CD8-positive, alpha-beta T cell (primary cell): ENCODE measurements at regions of chr17 and their contacts with region 1.

Region 1: DNA sequence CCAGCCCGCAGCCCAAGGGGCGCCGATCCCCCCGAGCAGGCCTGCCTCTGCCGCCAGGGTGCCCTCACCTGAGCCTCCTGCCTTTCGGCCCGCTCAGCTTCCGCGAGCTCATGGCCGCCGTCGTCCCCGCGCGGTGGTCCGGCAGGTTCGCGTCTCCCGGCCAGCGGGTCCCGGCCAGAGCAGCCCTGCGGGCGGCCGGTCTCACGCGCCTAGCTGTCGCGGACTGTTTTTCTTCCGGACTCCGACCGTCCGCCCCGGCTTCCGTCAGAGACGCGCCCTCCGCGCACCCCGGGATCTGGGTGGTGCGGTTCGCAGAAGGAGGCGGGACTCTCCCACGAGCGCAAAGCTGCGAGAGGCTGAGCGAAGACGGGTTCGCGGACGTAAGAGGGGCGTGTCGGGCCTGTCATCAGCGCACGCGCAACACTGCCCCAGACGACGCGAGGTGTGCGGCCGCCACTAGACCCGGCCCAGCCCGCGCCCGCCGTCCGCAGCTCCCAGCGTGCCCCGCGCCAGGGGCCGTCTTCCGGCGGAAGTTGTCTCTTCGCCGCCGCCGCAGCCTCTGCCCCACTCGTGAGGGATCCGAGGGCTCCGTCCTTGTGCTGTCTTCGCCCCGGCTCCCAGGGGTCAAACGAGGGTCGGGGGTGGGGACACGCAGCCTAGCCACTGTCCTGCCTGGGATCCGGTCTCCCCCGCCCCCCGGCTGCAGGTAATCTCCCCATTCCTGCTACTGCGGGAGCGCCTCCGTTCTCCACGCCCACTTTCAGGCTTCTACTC is at the start of gene INPP5K:
- DNase-seq: peak; percentile 95 to 100 (median 98)
- ATAC-seq: peak; percentile 91
- H3K4me3 ChIP-seq: peak within 1 kb of the TSS; percentile 93 to 99
- H3K4me3 Mint-ChIP-seq: peak within 1 kb of the TSS; percentile 90
- H3K27ac ChIP-seq: peak within 1 kb of the TSS; percentile 86 to 93
- H3K27ac Mint-ChIP-seq: peak within 1 kb of the TSS; percentile 91
- H3K4me1 ChIP-seq: peaks cover 20% of the 10 kb centered on the region
- H3K4me1 Mint-ChIP-seq: peaks cover 24% of the 10 kb centered on the region
- H3K27me3 ChIP-seq: no peaks in the 10 kb centered on the region
- H3K27me3 Mint-ChIP-seq: no peaks in the 10 kb centered on the region
- CTCF ChIP-seq: no peak
- total RNA-seq, gene INPP5K: 204 to 221 TPM

Region 2: GRCh38 chr17:1260086-1260769 is 256.3 kb before region 1 on chr17:
- CTCF ChIA-PET with region 1: interaction called, 4 read pairs
- POLR2A ChIA-PET with region 1: no interaction called
- intact Hi-C with region 1: loop called in 1 of 2 experiments (anchors 1 kb)
- DNase-seq: no peak
- ATAC-seq: no peak
- H3K4me3 ChIP-seq: peak overlapping the region in 1 of 2 experiments; percentile 49
- H3K4me3 Mint-ChIP-seq: peak overlapping the region; percentile 49
- H3K27ac ChIP-seq: no peak overlapping the region
- H3K27ac Mint-ChIP-seq: no peak overlapping the region
- H3K4me1 ChIP-seq: peaks cover 24% of the 10 kb centered on the region
- H3K4me1 Mint-ChIP-seq: peaks cover 31% of the 10 kb centered on the region
- H3K27me3 ChIP-seq: peaks cover 0 to 6% of the 10 kb centered on the region in 2 experiments
- H3K27me3 Mint-ChIP-seq: peaks cover 18% of the 10 kb centered on the region
- CTCF ChIP-seq: no peak

Region 3: DNA sequence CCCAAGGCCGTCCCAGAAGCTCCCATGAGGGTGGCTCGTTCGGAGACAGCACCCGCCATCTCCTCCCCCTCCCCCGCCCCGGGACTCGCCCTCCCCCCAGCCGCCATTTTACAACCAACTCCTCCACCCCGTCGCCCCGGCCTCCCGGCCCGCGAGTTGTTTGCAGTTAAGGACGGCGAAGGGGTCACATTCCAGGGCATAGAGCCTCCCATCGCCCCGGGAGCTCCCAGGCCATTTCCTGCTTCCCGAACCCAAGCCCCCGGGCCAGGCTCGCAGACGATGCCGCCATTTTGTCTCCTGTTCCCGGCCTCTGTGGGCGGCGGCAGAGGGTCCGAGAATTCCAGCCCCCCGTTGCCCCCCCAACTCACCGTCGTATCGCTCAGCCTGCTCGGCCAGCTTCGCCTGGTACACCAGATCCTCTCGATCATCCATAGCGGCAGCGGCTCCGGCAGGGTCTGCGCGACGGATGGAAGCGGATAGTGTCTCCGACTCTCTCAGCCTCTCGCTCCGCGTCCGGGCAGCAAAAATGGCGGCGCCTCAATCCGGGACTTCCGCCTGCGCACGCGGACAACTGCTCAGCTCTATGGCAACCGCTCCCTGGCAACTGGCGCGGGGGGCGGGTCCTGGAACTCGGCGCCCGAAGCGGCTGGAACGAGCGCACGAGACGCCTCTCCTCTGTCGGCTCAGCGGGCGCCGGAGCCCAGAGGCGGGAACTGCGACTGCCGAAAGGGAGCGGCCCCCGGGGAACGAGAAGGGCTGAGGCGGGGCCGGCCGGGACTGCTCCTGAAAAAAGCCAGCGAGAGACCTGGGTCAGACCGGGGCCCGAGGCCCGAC is 116.7 kb before region 1 on chr17 and contains the start of gene YWHAE:
- CTCF ChIA-PET with region 1: interaction called, 9 read pairs
- POLR2A ChIA-PET with region 1: interaction called, 3 read pairs
- intact Hi-C with region 1: loop called (anchors 1 kb)
- DNase-seq: peak; percentile 87 to 97 (median 96)
- ATAC-seq: peak; percentile 86
- H3K4me3 ChIP-seq: peak within 1 kb of the TSS; percentile 100
- H3K4me3 Mint-ChIP-seq: peak within 1 kb of the TSS; percentile 99
- H3K27ac ChIP-seq: peak within 1 kb of the TSS; percentile 94 to 98
- H3K27ac Mint-ChIP-seq: peak within 1 kb of the TSS; percentile 98
- H3K4me1 ChIP-seq: peaks cover 25% of the 10 kb centered on the region
- H3K4me1 Mint-ChIP-seq: peaks cover 41% of the 10 kb centered on the region
- H3K27me3 ChIP-seq: no peaks in the 10 kb centered on the region
- H3K27me3 Mint-ChIP-seq: no peaks in the 10 kb centered on the region
- CTCF ChIP-seq: no peak
- total RNA-seq, gene YWHAE: 125 to 134 TPM

Region 4: DNA sequence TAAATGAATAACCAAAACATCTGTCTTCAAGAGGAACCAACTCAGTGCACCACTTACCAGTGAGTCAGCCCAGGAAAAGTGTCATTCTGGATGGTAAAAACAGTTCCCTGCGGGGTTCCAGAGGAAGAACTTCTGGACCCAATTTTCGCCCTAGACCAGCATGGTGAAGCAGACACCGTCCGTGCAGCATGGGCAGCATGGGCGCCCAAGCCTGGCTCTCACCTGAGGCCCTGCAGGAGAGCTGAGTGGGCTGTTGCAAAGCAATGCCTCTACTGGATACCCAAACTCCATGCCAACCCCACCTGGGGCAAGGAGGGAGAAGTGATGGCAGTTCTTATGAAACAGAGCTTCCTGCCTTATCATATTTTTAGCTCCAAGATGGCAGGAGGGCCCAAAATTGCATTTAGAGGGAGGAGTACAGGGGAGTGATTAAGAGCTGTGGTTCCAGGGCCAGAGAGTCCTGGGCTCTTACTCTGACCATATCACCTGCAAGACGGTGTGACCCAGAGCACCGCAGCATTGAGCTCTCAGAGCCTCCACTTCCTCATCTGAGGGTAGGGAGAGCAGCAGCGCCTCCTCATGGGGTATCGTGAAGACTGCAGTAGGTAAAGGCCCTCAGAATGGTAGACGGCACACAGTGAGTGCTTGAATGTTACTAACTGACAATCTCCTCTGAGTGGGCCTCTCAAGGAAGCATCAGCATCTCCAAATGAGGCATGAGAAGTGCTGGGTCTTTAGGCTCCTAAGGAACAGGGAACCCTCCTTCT is 16.4 kb after region 1 on chr17:
- CTCF ChIA-PET with region 1: interaction called, 13 read pairs
- POLR2A ChIA-PET with region 1: no interaction called
- intact Hi-C with region 1: no loop called
- DNase-seq: peak in 8 of 9 experiments; percentile 9 to 66 (median 51)
- ATAC-seq: peak; percentile 93
- H3K4me3 ChIP-seq: no peak overlapping the region
- H3K4me3 Mint-ChIP-seq: no peak overlapping the region
- H3K27ac ChIP-seq: no peak overlapping the region
- H3K27ac Mint-ChIP-seq: peak overlapping the region; percentile 55
- H3K4me1 ChIP-seq: no peaks in the 10 kb centered on the region
- H3K4me1 Mint-ChIP-seq: no peaks in the 10 kb centered on the region
- H3K27me3 ChIP-seq: no peaks in the 10 kb centered on the region
- H3K27me3 Mint-ChIP-seq: no peaks in the 10 kb centered on the region
- CTCF ChIP-seq: peak; percentile 41

Region 5: DNA sequence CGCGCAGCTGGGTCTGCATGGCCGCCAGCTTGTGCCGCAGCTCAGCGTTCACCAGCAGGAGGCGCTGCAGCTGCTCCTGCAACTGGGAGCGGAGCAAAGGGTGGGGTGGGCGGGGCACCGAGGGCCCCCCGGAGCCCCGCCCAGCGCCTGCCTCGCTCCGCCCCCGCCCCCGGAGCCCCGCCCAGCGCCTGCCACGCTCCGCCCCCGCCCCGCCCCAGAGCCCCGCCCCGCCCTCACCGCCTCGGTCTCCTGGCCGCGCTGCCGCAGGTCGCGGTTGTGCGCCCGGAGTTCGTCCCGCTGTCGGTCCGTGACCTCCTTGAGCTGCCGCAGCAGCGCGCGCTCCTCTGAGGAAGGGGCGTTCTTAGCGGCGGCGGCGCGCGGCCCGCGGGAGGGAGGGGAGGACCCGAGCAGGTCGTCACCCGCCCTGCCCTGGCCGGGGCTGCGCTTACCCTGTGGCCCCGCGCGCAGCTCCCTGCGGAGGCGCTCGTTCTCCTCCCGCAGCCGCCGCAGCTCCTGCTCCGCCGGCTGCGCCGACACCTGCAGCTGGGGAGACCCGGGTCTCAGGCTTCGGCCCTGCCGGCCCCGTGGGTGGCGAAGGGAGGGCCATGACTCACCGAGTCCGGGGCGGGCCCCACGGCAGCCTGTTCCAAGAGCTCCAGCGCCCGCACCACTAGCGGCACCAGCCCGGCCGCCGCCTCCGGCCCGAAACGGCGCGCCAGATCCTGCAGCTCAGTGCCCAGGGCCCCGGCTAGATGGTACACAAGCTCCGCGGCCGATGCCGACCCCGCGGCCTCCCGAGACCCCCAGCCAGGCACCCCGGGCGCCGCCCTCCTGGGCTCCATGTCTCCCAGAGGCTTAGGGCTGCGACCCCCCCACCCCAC is 132.6 kb after region 1 on chr17:
- CTCF ChIA-PET with region 1: interaction called, 4 read pairs
- POLR2A ChIA-PET with region 1: interaction called, 3 read pairs
- intact Hi-C with region 1: loop called (anchors 2 to 5 kb)
- DNase-seq: peak; percentile 90 to 98 (median 93)
- ATAC-seq: peak; percentile 76
- H3K4me3 ChIP-seq: peak overlapping the region; percentile 34 to 70
- H3K4me3 Mint-ChIP-seq: peak overlapping the region; percentile 74
- H3K27ac ChIP-seq: peak overlapping the region in 1 of 2 experiments; percentile 44
- H3K27ac Mint-ChIP-seq: peak overlapping the region; percentile 49
- H3K4me1 ChIP-seq: peaks cover 16% of the 10 kb centered on the region
- H3K4me1 Mint-ChIP-seq: peaks cover 14% of the 10 kb centered on the region
- H3K27me3 ChIP-seq: no peaks in the 10 kb centered on the region
- H3K27me3 Mint-ChIP-seq: no peaks in the 10 kb centered on the region
- CTCF ChIP-seq: peak; percentile 71